AG04449 (cell line): ENCODE measurements at regions of chr10 and their contacts with region 1.

Region 1: GRCh38 chr10:93916257-93917063 is 22.7 kb downstream of the SLC35G1 start:
- DNase-seq: no peak
- H3K4me3 ChIP-seq: no peak overlapping the region
- CTCF ChIP-seq: peak; percentile 31

Region 2: GRCh38 chr10:93835770-93836169 is 80.7 kb before region 1 on chr10:
- CTCF ChIA-PET with region 1: no interaction called
- POLR2A ChIA-PET with region 1: no interaction called
- DNase-seq: no peak
- H3K4me3 ChIP-seq: no peak overlapping the region
- CTCF ChIP-seq: no peak

Region 3: DNA sequence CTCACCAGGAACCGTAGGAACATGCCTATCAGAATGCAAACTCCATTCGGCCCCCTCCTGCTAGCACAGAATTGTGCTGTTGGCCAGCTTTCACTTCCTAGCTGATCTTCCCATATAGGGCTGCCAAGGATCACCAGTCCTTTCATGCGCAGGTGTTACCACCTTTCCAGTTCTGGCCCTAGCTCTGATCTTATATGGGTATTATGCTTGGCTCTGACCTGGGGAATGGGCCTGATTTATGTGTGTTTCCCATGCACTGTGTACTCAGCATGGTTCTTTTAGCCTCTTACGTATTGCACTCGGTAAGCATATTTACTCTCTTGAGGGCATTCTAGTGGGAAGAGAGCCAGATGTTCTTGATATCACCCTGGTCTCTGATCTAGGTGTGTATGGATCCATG is 11.6 kb before region 1 on chr10:
- CTCF ChIA-PET with region 1: interaction called, 63 read pairs
- POLR2A ChIA-PET with region 1: no interaction called
- DNase-seq: no peak
- H3K4me3 ChIP-seq: no peak overlapping the region
- CTCF ChIP-seq: no peak

Region 4: DNA sequence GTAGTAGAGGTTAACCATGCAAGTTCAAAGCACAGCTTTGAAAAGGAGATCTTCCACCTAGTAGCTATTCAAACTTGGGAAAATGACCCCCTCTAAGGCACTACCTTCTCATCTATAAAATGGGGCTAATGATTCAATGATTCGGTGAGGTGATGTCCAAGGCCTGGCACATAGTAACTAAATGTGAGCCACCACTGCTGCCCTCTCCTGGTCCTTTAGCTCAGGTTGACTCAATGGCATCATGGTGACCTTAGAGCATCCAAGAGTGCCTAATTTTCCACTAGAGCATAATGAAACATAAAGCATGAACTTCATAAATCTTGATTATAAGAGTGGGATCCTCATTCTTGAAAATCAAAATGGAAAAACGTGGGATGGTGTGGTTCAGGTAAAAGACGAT is 61.0 kb after region 1 on chr10:
- CTCF ChIA-PET with region 1: interaction called, 15 read pairs
- POLR2A ChIA-PET with region 1: no interaction called
- DNase-seq: no peak
- H3K4me3 ChIP-seq: no peak overlapping the region
- CTCF ChIP-seq: no peak

Region 5: GRCh38 chr10:94225589-94225988 is 309.1 kb after region 1 on chr10:
- CTCF ChIA-PET with region 1: interaction called, 11 read pairs
- POLR2A ChIA-PET with region 1: no interaction called
- DNase-seq: no peak
- H3K4me3 ChIP-seq: no peak overlapping the region
- CTCF ChIP-seq: no peak

Region 6: GRCh38 chr10:94334857-94335256 is 418.4 kb after region 1 on chr10:
- CTCF ChIA-PET with region 1: interaction called, 15 read pairs
- POLR2A ChIA-PET with region 1: no interaction called
- DNase-seq: no peak
- H3K4me3 ChIP-seq: no peak overlapping the region
- CTCF ChIP-seq: no peak